Endothelial cell of umbilical vein (primary cell): ENCODE measurements at regions of chr19 and their contacts with region 1.

Region 1: GRCh38 chr19:57389730-57390598 is at the start of gene ZNF548:
- DNase-seq: peak; percentile 99
- H3K4me3 ChIP-seq: peak within 1 kb of the TSS; percentile 13 to 78 (median 73)
- H3K27ac ChIP-seq: peak within 1 kb of the TSS; percentile 55
- H3K4me1 ChIP-seq: peaks cover 10% of the 10 kb centered on the region
- H3K27me3 ChIP-seq: no peaks in the 10 kb centered on the region
- CTCF ChIP-seq: peak in 1 of 2 donors; percentile 31
- POLR2A ChIP-seq: no peak
- total RNA-seq, gene ZNF548: 7.8 and 8.8 TPM in 2 replicates

Region 2: GRCh38 chr19:57279418-57280066 is 110.4 kb before region 1 on chr19:
- CTCF ChIA-PET with region 1: no interaction called
- POLR2A ChIA-PET with region 1: no interaction called
- dilution Hi-C with region 1: no loop called
- intact Hi-C with region 1: loop called (anchors 1 kb)
- DNase-seq: peak; percentile 93
- H3K4me3 ChIP-seq: peak overlapping the region; percentile 21 to 77 (median 72)
- H3K27ac ChIP-seq: peak overlapping the region; percentile 90
- H3K4me1 ChIP-seq: peaks cover 20% of the 10 kb centered on the region
- H3K27me3 ChIP-seq: no peaks in the 10 kb centered on the region
- CTCF ChIP-seq: peak in 1 of 2 donors; percentile 26
- POLR2A ChIP-seq: peak; percentile 72

Region 3: DNA sequence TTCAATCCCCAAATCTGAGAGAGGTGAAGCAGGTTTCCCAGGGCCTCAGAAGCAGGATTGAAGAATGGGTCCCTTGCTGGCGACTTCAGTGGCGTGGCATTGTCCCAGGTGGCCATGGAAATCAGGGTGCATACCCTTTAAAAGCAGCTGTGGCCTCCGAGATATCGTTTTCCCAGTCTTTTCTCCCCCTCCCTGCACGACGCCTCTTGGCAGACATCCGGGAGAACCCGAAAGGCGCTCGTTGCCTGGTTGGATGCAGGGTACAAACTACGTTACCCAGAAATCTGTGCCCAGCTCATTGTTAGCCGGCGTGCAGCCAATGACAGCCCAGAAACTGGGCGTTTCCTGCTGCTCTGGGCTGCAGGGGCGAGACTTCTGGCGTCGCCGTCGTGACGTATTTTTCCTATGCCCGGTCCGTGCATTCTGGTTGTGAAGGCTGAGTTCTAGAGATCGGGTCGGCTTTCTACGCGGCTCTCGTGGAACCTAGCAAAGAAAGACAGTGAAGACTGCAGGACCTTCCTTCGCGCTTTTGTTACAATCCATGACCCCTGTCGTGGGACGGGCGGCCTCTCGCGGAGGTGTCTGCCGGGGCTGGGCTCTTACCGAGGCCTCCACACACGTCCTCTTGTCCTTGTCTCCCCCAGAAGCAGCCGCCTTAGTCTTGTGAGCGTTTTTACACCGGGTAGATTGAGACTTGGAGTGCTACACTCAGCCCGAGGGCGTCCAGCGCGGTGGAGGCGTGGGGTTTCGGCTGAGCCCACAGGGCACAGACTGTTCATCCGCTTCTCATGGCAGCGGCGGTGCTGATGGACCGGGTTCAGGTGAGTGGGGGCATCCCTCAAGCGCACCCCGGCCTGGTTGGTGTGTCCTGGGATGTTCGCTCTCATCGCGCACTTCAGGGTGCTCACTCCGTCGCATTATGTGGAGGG is 38.8 kb before region 1 on chr19 and contains the start of gene ZNF304:
- CTCF ChIA-PET with region 1: interaction called, 3 read pairs
- POLR2A ChIA-PET with region 1: interaction called, 3 read pairs
- dilution Hi-C with region 1: no loop called
- intact Hi-C with region 1: loop called (anchors 1 kb)
- DNase-seq: peak; percentile 95
- H3K4me3 ChIP-seq: peak within 1 kb of the TSS; percentile 42 to 73 (median 64)
- H3K27ac ChIP-seq: peak within 1 kb of the TSS; percentile 23
- H3K4me1 ChIP-seq: peaks cover 8% of the 10 kb centered on the region
- H3K27me3 ChIP-seq: no peaks in the 10 kb centered on the region
- CTCF ChIP-seq: no peak
- POLR2A ChIP-seq: peak; percentile 73
- total RNA-seq, gene ZNF304: 5.3 and 5.6 TPM in 2 replicates

Region 4: GRCh38 chr19:57410877-57411671 is 21.1 kb after region 1 on chr19 and contains the start of gene ZNF17:
- CTCF ChIA-PET with region 1: interaction called, 4 read pairs
- POLR2A ChIA-PET with region 1: no interaction called
- dilution Hi-C with region 1: no loop called
- intact Hi-C with region 1: loop called (anchors 1 kb)
- DNase-seq: peak; percentile 95
- H3K4me3 ChIP-seq: peak within 1 kb of the TSS; percentile 91 to 99 (median 97)
- H3K27ac ChIP-seq: no peak within 1 kb of the TSS
- H3K4me1 ChIP-seq: peaks cover 8% of the 10 kb centered on the region
- H3K27me3 ChIP-seq: no peaks in the 10 kb centered on the region
- CTCF ChIP-seq: no peak
- POLR2A ChIP-seq: no peak
- total RNA-seq, gene ZNF17: 4.7 and 6.4 TPM in 2 replicates

Region 5: DNA sequence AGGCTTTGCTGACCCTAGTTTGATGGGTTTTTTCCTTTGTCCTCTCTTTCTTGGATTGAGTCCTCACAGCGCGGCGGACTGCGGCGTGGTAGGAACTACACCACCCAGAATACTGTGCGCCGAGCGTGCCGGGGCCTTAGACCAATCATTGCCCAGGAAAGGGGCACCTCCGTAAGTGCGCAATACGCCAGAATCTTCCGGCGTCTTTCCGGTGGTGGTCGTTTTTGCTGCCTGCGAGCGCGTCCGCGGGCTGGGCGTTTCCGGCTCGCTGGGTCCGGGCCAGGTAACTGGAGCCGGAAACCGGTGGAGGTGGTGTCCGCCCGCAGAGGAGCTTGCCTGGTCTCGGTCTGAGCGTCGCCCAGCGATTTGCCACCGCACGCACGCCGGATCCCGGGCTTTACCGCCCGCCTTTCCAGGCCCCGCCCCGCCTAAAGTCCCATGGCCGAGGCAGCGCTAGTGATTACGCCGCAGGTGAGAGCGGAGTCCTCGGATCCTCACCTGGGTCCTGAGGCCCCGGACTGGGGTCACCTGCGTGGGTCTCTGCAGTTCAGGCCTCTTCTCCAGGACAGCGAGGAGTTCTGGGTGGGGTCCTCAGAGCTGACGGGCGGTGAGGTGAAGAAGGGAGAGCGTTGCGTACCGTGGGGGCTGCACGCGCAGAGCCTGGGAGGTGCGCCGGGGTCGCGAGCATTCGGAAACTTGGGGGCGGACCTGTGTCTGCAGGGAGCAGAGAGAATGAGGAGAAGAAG is 137.3 kb after region 1 on chr19 and contains the start of gene ZNF549:
- CTCF ChIA-PET with region 1: no interaction called
- POLR2A ChIA-PET with region 1: no interaction called
- dilution Hi-C with region 1: no loop called
- intact Hi-C with region 1: no loop called
- DNase-seq: peak; percentile 86
- H3K4me3 ChIP-seq: peak within 1 kb of the TSS; percentile 47 to 69 (median 63)
- H3K27ac ChIP-seq: peak within 1 kb of the TSS; percentile 7
- H3K4me1 ChIP-seq: peaks cover 3% of the 10 kb centered on the region
- H3K27me3 ChIP-seq: no peaks in the 10 kb centered on the region
- CTCF ChIP-seq: no peak
- POLR2A ChIP-seq: no peak
- total RNA-seq, gene ZNF549: 3.1 and 3.5 TPM in 2 replicates

Region 6: DNA sequence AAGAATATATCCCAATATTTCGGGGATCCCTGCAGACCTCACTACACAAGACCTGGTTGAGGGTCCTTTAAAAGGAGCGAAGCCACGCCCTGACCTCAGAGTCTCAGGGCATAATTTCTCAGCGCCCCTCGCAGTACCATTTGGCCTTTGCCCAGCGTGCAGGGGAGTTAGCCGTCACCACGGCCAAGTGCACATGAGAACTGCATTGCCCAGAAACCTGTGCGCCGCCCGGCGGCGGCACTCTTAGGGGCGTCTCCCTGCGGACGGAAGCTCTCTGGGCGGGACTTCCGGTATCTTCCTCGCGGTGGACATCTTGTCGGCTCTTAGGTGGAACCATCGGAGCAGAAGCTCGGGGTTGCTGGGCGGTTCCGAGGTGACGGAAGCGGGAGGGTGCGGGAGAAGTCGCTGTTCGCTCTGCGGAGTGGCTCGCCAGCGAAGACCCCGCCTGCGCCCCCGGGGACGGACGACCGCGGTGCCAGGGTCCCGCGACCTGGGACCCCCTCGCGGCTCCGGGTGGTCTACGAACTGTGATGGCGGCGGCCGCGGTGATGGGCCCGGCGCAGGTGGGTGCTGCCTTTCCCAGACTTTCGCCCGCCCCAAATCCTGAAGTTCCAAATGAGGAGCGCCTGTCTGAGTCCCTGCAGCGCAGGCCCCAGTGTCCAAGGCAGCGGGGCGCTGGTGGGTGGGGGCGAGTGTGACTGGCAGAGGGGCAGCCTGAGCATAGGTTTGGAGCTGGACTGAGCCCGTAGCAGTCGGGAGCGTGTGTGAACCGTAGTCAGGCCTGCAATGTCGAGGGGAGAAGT is 224.2 kb after region 1 on chr19 and contains the start of gene ZNF134:
- CTCF ChIA-PET with region 1: no interaction called
- POLR2A ChIA-PET with region 1: no interaction called
- dilution Hi-C with region 1: no loop called
- intact Hi-C with region 1: loop called (anchors 1 kb)
- DNase-seq: peak; percentile 84
- H3K4me3 ChIP-seq: peak within 1 kb of the TSS; percentile 53 to 77 (median 65)
- H3K27ac ChIP-seq: no peak within 1 kb of the TSS
- H3K4me1 ChIP-seq: no peaks in the 10 kb centered on the region
- H3K27me3 ChIP-seq: no peaks in the 10 kb centered on the region
- CTCF ChIP-seq: peak in 1 of 2 donors; percentile 62
- POLR2A ChIP-seq: peak; percentile 49
- total RNA-seq, gene ZNF134: 11.1 and 12.3 TPM in 2 replicates